ENCODE measurements at regions of chr14 and their contacts with region 1.

Region 1: DNA sequence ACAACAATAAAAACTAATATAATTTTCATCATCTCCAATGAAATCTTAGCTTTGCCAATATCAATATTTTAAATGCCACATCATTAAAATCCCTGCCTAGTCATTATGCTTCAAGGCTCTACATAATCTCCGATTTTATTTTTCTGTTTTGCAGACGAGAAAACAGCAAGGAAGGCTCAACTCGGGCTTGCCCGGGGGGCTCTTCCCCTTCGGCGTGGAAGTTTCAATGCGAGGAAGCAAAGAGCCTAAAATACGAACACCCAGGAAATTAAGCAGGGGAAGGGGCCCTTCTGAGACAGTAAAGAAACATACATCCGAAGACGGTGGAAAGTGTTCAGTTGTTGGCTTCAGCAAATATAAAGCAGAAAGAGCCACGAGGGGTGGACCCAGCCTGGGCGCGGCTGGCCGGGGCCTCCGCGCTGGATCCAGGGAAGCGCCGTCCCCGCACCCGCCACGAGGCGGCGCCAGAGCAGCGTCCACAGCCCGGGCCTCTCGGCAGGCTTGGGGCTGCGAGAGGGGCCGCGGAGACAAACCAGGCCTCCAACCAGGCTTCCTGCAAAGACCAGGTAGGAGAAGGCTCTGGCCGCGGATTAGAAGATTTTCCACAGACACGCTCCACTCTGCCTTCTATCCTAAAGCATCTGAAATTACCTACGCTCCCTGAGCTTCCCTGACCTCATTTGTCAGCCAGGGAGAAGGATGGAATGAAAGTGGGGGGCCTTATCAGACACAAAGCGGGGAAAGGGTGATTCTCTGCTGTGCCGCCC is 77.2 kb downstream of the SERPINA3 start:
- DNase-seq: peak in 4 of 6 donors; percentile 39 to 95 (median 70)
- ATAC-seq: peak; percentile 95 to 100 (median 98)
- H3K4me3 ChIP-seq: no peak overlapping the region
- H3K27ac ChIP-seq: no peak overlapping the region
- H3K4me1 ChIP-seq: no peaks in the 10 kb centered on the region
- H3K27me3 ChIP-seq: no peaks in the 10 kb centered on the region
- CTCF ChIP-seq: peak; percentile 87 to 96 (median 92)

Region 2: GRCh38 chr14:94439453-94440057 is 249.8 kb before region 1 on chr14:
- intact Hi-C with region 1: loop called in 1 of 3 experiments (anchors 10 kb)
- DNase-seq: no peak
- ATAC-seq: no peak
- H3K4me3 ChIP-seq: no peak overlapping the region
- H3K27ac ChIP-seq: no peak overlapping the region
- H3K4me1 ChIP-seq: no peaks in the 10 kb centered on the region
- H3K27me3 ChIP-seq: no peaks in the 10 kb centered on the region
- CTCF ChIP-seq: no peak

Region 3: GRCh38 chr14:95106971-95107370 is 417.6 kb after region 1 on chr14:
- intact Hi-C with region 1: loop called in 1 of 3 experiments (anchors 10 kb)
- DNase-seq: no peak
- ATAC-seq: no peak
- H3K4me3 ChIP-seq: no peak overlapping the region
- H3K27ac ChIP-seq: no peak overlapping the region
- H3K4me1 ChIP-seq: peaks cover 0 to 4% (median 0%) of the 10 kb centered on the region in 3 donors
- H3K27me3 ChIP-seq: no peaks in the 10 kb centered on the region
- CTCF ChIP-seq: no peak

Region 4: GRCh38 chr14:95431199-95432143 is 742.1 kb after region 1 on chr14:
- intact Hi-C with region 1: loop called in 2 of 3 experiments (anchors 5 to 10 kb)
- DNase-seq: peak in 2 of 6 donors; percentile 9 to 29
- ATAC-seq: peak; percentile 74 to 84 (median 82)
- H3K4me3 ChIP-seq: no peak overlapping the region
- H3K27ac ChIP-seq: no peak overlapping the region
- H3K4me1 ChIP-seq: no peaks in the 10 kb centered on the region
- H3K27me3 ChIP-seq: no peaks in the 10 kb centered on the region
- CTCF ChIP-seq: peak; percentile 26 to 39 (median 30)